Transverse colon (tissue), 4 donors: ENCODE measurements at regions of chr7 and their contacts with region 1.

Region 1: DNA sequence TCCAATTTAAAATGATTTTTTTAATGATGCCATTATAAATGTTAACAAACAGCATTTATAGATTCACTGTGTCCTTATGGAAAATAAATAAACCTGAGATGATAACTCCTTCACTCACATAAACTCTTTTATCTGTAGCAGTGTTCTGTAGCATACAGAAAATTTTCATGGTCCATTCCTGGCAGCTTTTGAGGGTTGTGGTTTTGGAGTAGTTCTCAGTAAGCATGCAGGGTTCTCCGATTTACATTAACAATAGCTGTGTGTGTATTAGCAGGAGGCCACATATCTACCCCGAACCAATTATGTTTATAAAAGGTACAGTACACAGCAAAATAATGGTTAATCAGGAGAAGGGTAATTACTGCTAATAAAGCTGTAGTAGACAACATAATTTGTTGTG is 162.7 kb downstream of the CDCA7L start:
- DNase-seq: no peak
- H3K4me3 ChIP-seq: no peak overlapping the region
- H3K27ac ChIP-seq: no peak overlapping the region
- H3K4me1 ChIP-seq: no peaks in the 10 kb centered on the region
- H3K27me3 ChIP-seq: no peaks in the 10 kb centered on the region
- CTCF ChIP-seq: no peak
- EP300 ChIP-seq: no peak
- POLR2A ChIP-seq: no peak

Region 2: DNA sequence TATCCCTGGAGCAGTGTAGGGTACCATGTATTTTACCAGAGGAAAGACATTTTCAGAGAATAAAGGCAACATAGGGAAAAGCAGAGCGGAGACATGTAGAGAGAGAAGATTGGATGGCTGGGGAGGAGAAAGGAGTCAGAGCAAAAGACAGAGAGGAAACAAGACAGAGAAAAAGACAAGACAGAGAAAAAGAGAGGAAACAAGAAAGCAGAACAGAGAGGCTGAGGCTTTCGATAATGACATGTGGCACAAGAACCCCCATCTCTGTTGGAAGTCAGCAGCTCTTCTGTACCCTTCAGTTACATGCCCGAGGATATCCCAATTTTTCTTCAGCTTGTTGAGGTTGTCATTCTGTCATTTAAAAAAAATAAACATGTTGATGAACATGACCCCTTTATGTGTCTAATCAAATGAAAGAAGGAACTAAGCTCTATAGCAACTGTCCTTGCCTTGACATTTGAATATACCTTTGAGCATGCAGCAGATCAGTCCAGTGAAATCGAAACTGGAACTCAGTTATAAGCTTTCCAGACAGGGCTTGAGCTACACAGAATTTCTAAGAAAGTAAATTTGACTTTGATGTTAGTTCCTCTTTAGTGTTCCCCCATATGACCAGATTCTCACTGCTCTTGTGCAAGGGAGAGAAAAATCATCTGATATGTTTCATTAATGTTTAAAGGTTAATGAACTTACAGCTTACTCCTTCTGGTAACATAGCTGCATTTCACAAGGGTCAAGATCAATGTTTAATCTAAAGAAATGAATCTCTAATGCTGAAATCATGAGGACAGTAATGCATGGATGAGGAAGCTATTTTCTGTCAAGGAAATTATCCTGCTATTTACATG is 430.2 kb before region 1 on chr7:
- in situ Hi-C with region 1: no loop called
- intact Hi-C with region 1: loop called (anchors 5 kb)
- DNase-seq: no peak
- H3K4me3 ChIP-seq: no peak overlapping the region
- H3K27ac ChIP-seq: peak overlapping the region in 3 of 4 donors; percentile 19 to 52 (median 42)
- H3K4me1 ChIP-seq: peaks cover 0 to 22% (median 0%) of the 10 kb centered on the region in 4 donors
- H3K27me3 ChIP-seq: no peaks in the 10 kb centered on the region
- CTCF ChIP-seq: no peak
- EP300 ChIP-seq: no peak
- POLR2A ChIP-seq: no peak

Region 3: DNA sequence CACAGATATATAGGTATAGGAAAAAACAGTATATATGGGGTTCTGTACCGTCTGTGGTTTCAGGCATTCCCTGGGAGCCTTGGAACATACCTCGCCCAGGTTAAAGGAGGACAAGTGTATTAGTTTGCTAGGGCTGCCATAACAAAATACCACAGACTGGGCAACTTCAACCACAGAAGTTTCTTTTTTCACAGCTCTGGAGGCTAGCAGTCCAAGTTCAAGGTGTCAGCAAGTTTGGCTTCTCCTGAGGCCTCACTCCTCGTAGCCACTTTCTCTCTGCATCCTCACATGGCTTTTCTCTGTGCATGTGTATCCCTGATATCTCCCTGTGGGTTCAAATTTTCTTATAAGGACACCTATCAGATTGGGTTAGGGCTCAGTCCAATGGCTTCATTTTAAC is 51.0 kb before region 1 on chr7:
- in situ Hi-C with region 1: no loop called
- intact Hi-C with region 1: no loop called
- DNase-seq: no peak
- H3K4me3 ChIP-seq: no peak overlapping the region
- H3K27ac ChIP-seq: no peak overlapping the region
- H3K4me1 ChIP-seq: no peaks in the 10 kb centered on the region
- H3K27me3 ChIP-seq: no peaks in the 10 kb centered on the region
- CTCF ChIP-seq: no peak
- EP300 ChIP-seq: no peak
- POLR2A ChIP-seq: no peak

Region 4: DNA sequence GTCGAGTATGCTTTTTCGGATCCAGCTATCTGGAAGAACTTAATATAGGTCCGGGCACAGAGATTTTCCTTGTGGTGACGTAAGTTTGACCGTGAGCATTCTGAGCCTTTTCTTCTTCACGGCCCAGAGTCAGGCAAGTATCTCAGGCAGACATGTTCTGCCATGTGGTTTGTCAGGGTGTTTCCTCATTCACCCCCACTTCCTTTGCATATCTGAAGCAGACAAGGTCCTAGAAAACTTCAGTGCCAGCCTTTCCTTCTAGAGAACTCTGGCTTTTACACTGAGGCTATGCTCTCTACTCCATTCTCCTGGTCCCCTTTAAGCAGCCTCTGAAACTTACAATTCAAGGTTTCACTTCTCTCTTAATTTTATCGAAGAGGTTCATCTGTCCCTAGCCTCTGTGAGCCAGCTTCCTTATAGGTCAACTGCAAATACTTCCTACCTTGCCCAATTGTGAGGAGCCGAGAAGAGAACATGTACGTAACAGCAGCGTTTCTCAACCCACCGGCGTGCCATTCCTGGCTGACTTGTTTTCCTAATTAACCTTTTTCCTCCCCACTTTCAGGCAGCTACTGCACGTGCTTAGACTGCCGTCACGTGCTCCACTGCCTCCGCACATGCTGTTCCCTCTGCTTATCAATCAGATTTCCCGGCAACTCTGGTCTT is 115.4 kb after region 1 on chr7:
- in situ Hi-C with region 1: no loop called
- intact Hi-C with region 1: no loop called
- DNase-seq: no peak
- H3K4me3 ChIP-seq: no peak overlapping the region
- H3K27ac ChIP-seq: peak overlapping the region in 2 of 4 donors; percentile 51 to 52
- H3K4me1 ChIP-seq: no peaks in the 10 kb centered on the region
- H3K27me3 ChIP-seq: no peaks in the 10 kb centered on the region
- CTCF ChIP-seq: no peak
- EP300 ChIP-seq: no peak
- POLR2A ChIP-seq: no peak

Region 5: GRCh38 chr7:21923658-21924057 is 140.7 kb after region 1 on chr7:
- in situ Hi-C with region 1: no loop called
- intact Hi-C with region 1: no loop called
- DNase-seq: no peak
- H3K4me3 ChIP-seq: no peak overlapping the region
- H3K27ac ChIP-seq: no peak overlapping the region
- H3K4me1 ChIP-seq: no peaks in the 10 kb centered on the region
- H3K27me3 ChIP-seq: no peaks in the 10 kb centered on the region
- CTCF ChIP-seq: no peak
- EP300 ChIP-seq: no peak
- POLR2A ChIP-seq: no peak